AG04449 (cell line): ENCODE measurements at regions of chr15 and their contacts with region 1.

Region 1: DNA sequence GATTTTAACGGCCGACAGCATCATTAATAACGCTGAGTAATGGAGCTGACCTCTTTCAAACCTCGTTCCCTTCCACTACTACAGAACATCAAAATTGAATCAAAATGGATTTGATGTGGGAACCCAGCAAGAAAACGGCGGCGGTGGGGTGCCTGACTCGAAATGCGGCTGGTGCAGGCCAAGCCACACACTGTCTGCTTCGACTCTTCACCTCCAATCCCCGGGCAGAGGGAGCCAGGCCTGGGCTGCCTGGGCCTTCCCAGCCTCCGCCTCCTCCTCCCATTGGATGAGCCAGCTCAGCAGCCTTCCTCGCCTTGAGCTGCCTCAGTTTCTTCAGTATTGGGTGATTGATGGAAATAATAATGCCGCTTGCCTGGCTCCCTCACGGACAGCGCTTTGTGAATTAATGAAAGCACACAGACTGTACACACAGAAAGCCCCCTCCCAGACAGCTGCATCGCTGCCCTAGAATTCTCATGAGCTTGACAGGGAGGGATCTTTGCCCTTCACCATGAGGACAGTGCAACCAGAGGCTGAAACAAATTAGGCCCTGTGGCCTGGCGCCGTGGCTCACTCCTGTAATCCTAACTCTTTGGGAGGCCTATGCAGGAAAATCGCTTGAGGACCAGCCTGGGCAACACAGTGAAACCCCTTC is 11.4 kb upstream of the MEGF11 start:
- DNase-seq: no peak
- H3K4me3 ChIP-seq: no peak overlapping the region
- CTCF ChIP-seq: no peak

Region 2: DNA sequence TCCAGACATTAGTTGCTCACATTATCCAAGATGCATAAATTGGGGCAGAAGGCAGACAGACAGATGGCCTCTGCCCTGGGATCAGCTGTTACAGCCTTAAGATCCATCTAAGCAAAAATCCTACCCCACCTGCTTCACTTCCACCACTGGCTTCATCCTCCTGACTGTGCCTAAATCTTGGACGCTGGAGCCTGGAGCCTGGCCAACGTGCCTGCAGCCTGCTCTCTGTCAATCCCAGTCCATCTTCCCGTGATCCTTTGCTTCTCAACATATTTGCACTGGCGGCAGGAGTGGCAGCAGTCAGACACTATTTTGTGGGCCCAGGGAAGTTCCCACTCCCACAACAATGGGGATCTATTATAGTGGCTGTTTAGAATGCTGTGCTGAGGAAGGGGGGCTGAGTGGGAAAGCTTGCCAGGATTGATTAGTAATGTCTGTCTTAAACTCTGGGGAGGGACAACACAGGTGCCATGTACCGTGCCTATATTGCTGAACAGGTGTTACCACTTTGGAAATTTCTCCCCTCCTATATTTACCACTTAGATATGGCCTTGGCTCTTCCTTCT is 132.7 kb before region 1 on chr15:
- CTCF ChIA-PET with region 1: no interaction called
- POLR2A ChIA-PET with region 1: no interaction called
- DNase-seq: no peak
- H3K4me3 ChIP-seq: no peak overlapping the region
- CTCF ChIP-seq: no peak

Region 3: GRCh38 chr15:66251790-66252684 is 12.9 kb before region 1 on chr15:
- CTCF ChIA-PET with region 1: interaction called, 14 read pairs
- POLR2A ChIA-PET with region 1: no interaction called
- DNase-seq: no peak
- H3K4me3 ChIP-seq: peak overlapping the region; percentile 52
- CTCF ChIP-seq: peak; percentile 82

Region 4: GRCh38 chr15:66411190-66411589 is 146.2 kb after region 1 on chr15:
- CTCF ChIA-PET with region 1: no interaction called
- POLR2A ChIA-PET with region 1: no interaction called
- DNase-seq: no peak
- H3K4me3 ChIP-seq: no peak overlapping the region
- CTCF ChIP-seq: no peak

Region 5: DNA sequence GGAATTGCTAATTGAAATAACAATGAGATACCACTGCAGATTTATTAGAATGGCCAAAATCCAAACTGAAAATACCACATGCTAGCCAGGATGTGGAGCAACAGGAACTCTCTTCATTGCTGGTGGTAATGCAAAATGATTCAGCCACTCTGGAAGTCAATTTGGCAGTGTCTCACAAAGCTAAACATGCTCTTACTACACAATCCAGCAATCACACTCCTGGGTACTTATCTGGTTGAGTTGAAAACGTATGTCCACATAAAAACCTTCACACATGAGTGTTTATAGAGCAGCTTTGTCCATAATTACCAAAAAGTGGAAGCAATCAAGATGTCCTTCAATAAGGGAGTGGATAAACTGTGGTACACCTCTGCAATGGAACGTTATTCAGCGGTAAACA is 550.3 kb after region 1 on chr15:
- CTCF ChIA-PET with region 1: no interaction called
- POLR2A ChIA-PET with region 1: no interaction called
- DNase-seq: peak; percentile 89
- H3K4me3 ChIP-seq: no peak overlapping the region
- CTCF ChIP-seq: no peak